Left colon (tissue), 2 donors: ENCODE measurements at regions of chr3 and their contacts with region 1.

Region 1: GRCh38 chr3:141561426-141562034 is 74.7 kb downstream of the RASA2 start:
- DNase-seq: no peak
- ATAC-seq: peak; percentile 63

Region 2: DNA sequence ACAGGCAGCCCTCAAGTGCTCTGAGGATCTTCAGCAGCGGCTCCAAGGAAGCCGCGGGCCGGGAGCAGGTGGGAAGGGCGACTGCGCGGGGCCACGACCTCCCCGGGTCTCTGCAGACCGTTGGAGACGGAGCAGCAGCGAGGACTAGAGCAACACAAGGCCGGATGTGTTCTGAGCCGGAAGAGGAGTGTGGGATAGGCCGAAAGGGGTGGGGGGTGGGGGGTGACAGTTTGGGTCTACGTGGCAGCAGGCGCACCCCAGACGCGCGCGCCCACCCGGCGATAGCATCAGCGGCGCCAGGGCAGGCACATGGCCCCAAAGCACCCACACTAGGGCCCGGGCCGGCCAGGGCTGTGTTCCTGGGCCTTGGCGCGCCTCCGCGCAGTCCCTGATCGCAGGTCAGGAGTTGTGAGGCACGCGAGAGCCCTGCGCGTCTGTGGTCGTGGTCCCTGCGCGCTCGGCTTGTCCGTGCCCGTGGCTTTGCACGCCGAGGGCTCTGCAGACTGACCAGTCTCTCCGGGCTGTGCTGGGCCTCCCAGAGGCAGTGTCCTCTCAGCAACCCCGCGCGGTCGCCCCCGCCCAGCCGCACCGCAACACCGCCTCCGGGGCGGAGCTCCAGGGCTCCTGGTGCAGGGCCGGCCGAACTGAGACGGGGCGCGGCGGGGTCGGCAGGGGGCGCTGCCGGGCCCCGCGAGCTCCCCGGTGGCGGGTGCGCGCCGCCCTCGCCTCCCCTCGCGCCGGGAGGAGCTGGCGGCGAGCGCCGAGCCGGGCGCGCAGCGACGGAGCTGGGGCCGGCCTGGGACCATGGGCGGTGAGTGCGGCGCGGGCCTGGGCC is 330.2 kb before region 1 on chr3 and contains the start of gene PXYLP1:
- intact Hi-C with region 1: no loop called
- DNase-seq: peak; percentile 92 to 96
- ATAC-seq: peak; percentile 88
- total RNA-seq, gene PXYLP1: 8.2 to 11.3 TPM

Region 3: GRCh38 chr3:141311496-141312353 is 249.8 kb before region 1 on chr3:
- intact Hi-C with region 1: loop called in 1 of 2 experiments (anchors 5 kb)
- DNase-seq: peak; percentile 99
- ATAC-seq: peak; percentile 93

Region 4: DNA sequence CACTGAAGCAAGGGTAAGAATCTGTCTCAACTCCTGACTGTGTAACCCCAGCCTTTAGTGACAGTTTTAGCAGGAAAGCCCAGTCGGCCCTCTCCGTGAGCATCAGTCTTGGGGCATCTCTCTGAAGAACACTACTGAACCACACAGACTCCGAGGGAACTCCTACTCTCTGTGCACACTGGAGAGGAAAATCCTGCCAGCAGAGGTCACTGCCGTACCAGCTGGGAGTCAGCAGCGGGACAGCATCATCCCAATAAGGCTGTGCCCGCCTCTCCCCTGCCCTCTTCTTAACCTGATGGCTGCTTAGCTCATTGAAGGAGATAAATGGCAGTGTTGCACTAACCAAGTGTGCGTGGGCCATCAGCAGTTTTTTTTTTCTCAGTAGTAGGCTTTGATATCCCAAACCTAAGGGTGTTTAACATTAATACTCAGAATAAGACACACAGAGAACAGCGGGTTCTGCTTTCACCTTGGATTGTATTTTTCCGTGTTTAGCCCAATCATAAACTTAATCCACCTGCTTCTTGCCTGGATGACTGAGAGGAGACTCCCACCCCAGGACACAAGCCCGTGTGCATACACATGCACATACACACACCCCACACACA is 101.3 kb before region 1 on chr3:
- intact Hi-C with region 1: loop called in 1 of 2 experiments (anchors 5 kb)
- DNase-seq: peak; percentile 82 to 95
- ATAC-seq: peak; percentile 88

Region 5: GRCh38 chr3:141605883-141606282 is 44.4 kb after region 1 on chr3:
- intact Hi-C with region 1: no loop called
- DNase-seq: no peak
- ATAC-seq: no peak

Region 6: DNA sequence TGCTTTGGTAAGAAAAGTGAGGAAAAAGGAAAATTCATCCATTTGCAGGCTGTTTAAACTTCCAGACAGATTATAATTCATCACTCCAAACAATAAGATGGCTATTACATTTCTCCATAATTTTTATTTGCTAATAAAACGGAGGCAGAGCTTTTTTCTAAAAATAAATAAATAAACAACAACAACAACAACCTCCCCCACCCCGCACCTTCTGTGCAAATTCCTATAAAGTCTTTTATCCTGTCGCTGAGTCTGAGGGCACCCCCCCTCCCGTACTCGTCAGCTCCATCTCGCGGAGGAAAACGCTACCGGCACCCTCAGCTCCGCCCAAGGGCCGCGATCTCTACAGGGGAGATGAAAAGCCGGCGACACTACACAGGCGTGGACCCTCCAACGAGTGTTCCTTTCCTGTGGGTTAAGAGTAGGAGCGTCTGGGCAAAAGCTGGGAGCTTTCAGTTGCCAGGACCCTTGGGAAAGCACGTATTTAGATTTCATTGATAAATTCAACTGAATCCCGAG is 313.9 kb after region 1 on chr3:
- intact Hi-C with region 1: no loop called
- DNase-seq: peak; percentile 85 to 91
- ATAC-seq: peak; percentile 74